Natural killer cell (primary cell): ENCODE measurements at regions of chr2 and their contacts with region 1.

Region 1: GRCh38 chr2:69643602-69644505 is at the start of gene AAK1:
- DNase-seq: peak; percentile 81 to 90
- ATAC-seq: peak; percentile 58 to 80 (median 74)
- H3K4me3 ChIP-seq: peak within 1 kb of the TSS; percentile 96
- H3K4me3 Mint-ChIP-seq: peak within 1 kb of the TSS; percentile 97
- H3K27ac ChIP-seq: peak within 1 kb of the TSS; percentile 84
- H3K27ac Mint-ChIP-seq: peak within 1 kb of the TSS; percentile 95 to 97
- H3K4me1 ChIP-seq: peaks cover 62% of the 10 kb centered on the region
- H3K4me1 Mint-ChIP-seq: peaks cover 81 to 82% of the 10 kb centered on the region in 2 donors
- H3K27me3 ChIP-seq: no peaks in the 10 kb centered on the region
- H3K27me3 Mint-ChIP-seq: no peaks in the 10 kb centered on the region
- CTCF ChIP-seq: no peak
- total RNA-seq, gene AAK1: 174 to 249 (median 204) TPM

Region 2: GRCh38 chr2:69616756-69617155 is 27.1 kb before region 1 on chr2:
- intact Hi-C with region 1: loop called (anchors 1 kb)
- DNase-seq: peak; percentile 35 to 52
- ATAC-seq: peak in 2 of 3 donors; percentile 42 to 60
- H3K4me3 ChIP-seq: no peak overlapping the region
- H3K4me3 Mint-ChIP-seq: peak overlapping the region; percentile 43
- H3K27ac ChIP-seq: peak overlapping the region; percentile 60
- H3K27ac Mint-ChIP-seq: no peak overlapping the region
- H3K4me1 ChIP-seq: peaks cover 72% of the 10 kb centered on the region
- H3K4me1 Mint-ChIP-seq: peaks cover 0 to 3% of the 10 kb centered on the region in 2 donors
- H3K27me3 ChIP-seq: no peaks in the 10 kb centered on the region
- H3K27me3 Mint-ChIP-seq: no peaks in the 10 kb centered on the region
- CTCF ChIP-seq: no peak

Region 3: GRCh38 chr2:69693061-69693774 is 49.4 kb after region 1 on chr2:
- intact Hi-C with region 1: loop called (anchors 2 kb)
- DNase-seq: peak; percentile 24 to 75
- ATAC-seq: peak; percentile 75 to 80 (median 75)
- H3K4me3 ChIP-seq: peak overlapping the region; percentile 8
- H3K4me3 Mint-ChIP-seq: peak overlapping the region; percentile 71
- H3K27ac ChIP-seq: peak overlapping the region; percentile 86
- H3K27ac Mint-ChIP-seq: peak overlapping the region; percentile 86 to 88
- H3K4me1 ChIP-seq: peaks cover 34% of the 10 kb centered on the region
- H3K4me1 Mint-ChIP-seq: peaks cover 60 to 65% of the 10 kb centered on the region in 2 donors
- H3K27me3 ChIP-seq: no peaks in the 10 kb centered on the region
- H3K27me3 Mint-ChIP-seq: no peaks in the 10 kb centered on the region
- CTCF ChIP-seq: no peak

Region 4: DNA sequence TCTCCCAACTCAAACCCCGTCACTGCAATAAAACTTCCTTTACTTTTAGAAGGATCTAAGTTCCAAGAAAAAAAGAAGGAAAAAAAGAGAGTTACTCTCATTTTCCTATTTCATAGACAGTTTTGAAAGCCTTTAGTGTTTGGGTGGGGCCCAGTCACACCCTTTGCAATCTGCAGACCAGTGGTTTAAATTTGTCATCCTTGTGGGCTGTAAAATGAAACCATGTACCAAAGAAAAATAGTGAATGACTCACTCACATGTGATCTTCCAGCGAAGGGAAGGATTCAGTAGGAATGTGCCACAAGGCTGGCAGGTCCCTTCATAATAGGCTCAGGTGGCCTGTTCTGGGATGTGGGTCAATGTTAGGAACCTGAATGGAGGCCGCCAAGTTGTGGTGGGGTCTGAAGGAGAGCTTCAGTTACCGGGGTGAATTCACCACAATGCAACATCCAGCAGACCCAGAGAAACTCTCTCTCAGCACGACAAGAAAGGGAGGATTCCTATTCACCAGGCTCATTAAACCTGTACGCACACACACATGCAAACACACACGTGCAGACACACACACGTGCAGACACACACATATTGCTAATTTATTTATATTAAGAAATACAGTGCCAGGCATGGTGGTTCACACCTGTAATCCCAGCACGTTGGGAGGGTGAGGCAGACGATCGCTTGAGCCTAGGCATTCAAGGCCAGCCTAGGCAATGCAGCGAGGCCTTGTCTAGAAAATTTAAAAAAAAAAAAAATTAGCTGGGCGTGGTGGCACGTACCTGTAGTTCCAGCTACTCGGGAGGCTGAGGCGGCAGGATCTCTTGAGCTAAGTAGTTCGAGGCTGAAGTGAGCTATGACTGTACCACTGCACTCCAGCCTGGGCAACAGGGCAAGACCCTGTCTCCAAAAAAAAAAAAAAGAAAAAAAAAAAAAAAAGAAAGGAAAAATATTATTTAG is 126.6 kb after region 1 on chr2:
- intact Hi-C with region 1: loop called (anchors 5 kb)
- DNase-seq: peak; percentile 44
- ATAC-seq: peak; percentile 54 to 75 (median 70)
- H3K4me3 ChIP-seq: no peak overlapping the region
- H3K4me3 Mint-ChIP-seq: peak overlapping the region; percentile 88
- H3K27ac ChIP-seq: peak overlapping the region; percentile 85
- H3K27ac Mint-ChIP-seq: peak overlapping the region; percentile 70 to 93
- H3K4me1 ChIP-seq: peaks cover 61% of the 10 kb centered on the region
- H3K4me1 Mint-ChIP-seq: peaks cover 81 to 85% of the 10 kb centered on the region in 2 donors
- H3K27me3 ChIP-seq: no peaks in the 10 kb centered on the region
- H3K27me3 Mint-ChIP-seq: no peaks in the 10 kb centered on the region
- CTCF ChIP-seq: no peak